ENCODE measurements at regions of chr7 and their contacts with region 1.

Region 1: DNA sequence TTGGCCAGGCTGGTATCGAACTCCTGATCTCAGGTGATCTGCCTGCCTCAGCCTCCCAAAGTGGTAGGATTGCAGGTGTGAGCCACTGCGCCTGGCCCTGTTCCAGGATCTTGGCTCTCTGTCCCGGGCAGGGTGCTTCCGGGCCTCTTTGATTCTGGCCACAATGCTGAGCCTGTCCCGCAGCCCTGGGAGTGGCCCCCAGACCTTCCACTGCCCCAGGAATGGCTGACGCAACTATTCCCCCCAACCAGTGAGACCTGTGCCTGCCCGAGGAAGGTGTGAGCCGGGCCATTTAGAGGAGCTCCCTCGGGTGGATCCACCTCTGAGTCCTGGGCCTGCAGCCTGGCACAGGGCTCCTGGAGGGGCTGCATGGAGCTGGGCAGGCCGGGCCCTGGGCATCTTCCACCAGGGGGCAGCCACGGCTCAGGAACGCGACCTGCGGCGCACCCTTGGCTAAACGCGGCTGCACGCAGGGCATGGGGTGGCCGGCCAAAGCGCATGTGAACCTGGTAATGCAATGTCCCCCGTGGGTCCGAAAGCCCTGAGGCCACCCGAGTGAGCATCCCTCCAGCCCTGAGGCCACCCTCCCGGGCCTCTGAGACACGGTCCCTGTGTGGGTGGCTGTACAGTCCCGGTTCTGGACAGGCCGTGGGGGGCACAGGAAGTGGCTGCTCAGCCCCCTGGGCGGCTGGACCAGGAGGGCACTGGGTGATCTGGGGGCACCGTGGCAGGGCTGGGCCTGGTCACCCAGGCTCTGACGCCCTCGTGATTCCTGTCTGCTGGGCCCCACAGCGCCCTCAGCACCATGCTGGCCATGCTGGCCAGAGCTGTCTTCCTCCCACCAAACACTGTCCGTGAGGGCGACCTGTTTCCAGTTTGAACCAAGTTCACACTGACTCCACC is 24.8 kb downstream of the GRIFIN start:
- DNase-seq: peak; percentile 93
- ATAC-seq: peak; percentile 97

Region 2: DNA sequence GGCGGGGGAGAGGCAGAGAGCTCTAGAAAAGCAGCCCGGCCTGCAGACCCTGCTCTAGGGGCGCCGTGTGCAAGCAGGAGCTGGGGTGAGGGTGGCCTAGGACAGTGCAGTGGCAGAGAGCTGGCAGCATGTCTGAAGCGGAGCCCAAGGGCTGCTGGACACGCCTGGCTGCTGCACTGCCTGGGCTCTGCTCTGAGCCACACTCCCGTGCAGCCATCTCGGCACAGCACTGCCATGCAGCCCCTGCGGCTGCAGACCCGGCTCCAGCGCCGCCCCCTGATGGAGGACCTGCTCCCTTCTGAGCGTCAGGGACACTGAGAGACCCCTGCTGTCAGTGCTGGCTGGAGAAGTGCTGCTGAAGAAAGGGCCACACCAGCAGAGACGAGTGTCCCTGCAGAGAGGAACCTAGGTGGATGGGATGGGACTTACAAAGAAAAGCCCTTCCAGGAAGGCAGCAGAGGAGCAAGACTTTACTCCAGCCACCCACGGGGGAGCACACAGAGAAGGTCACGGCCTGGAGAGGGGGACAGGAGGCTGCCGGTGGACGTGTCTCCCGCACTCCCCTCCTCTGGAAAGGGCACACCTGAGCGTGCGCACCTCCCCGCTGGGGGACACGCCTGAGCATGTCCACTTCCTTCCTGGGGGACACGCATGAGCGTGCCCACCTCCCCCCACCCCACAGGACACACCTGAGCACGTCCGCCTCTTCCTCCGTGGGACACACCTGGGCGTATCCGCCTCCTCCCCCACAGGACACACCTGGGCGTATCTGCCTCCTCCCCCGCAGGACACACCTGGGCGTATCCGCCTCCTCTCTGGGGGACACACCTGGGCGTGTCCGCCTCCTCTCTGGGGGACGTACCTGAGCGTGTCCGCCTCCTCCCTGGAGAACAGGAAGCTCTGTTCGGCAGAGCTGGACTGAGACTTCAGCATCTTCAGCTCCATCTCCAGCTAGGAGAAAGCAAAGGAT is 471.5 kb before region 1 on chr7:
- intact Hi-C with region 1: no loop called
- DNase-seq: peak; percentile 21
- ATAC-seq: no peak

Region 3: DNA sequence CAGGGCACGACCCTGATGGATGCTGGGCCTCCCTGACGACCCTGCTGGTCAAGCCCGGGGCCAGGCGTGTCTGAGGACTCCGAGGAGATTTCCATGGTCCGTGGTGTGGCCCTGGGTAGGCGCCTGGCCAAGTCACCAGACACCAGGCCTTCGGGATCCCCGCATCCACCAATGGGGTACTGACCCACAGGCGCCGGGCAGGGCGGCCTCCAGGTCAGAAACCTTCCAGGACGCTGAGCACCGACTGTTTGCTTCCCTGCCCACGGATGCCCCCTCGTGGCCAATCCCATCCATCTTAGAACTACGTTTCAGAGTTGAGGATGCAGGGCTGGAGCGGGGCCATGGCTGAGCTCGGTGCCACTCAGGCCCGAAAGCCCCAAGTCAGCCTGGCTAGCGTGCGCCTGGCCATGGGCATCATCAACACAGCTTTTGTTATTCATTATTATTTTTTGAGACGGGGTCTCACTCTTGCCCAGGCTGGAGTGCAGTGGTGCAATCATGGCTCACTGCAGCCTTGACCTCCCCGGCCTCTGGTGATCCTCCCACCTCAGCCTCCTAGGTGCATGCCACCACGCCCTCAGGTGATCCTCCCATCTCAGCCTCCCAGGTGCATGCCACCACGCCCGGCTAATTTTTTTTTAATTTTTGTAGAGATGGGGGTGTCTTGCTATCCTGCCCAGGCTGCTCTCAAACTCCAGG is 229.5 kb after region 1 on chr7:
- intact Hi-C with region 1: loop called (anchors 10 kb)
- DNase-seq: peak; percentile 90
- ATAC-seq: peak; percentile 90

Region 4: GRCh38 chr7:2844165-2844898 is 392.9 kb after region 1 on chr7 and contains the start of gene GNA12:
- intact Hi-C with region 1: no loop called
- DNase-seq: peak; percentile 99
- ATAC-seq: peak; percentile 97
- total RNA-seq, gene GNA12: 40.4 TPM

Measured in left ventricle myocardium superior (tissue), 1 donor.